Activated CD8-positive, alpha-beta T cell treated with anti-CD3 and anti-CD28 coated beads, Interleukin-2, amount 10 ng/mL, durations not matched to agents 7 days and 5 days (primary cell): ENCODE measurements at regions of chr6 and their contacts with region 1.

Region 1: GRCh38 chr6:70221025-70221714 is 81.7 kb downstream of the COL9A1 start:
- DNase-seq: no peak
- ATAC-seq: no peak
- H3K4me3 Mint-ChIP-seq: no peak overlapping the region
- H3K27ac Mint-ChIP-seq: no peak overlapping the region
- H3K4me1 Mint-ChIP-seq: no peaks in the 10 kb centered on the region
- H3K27me3 Mint-ChIP-seq: peaks cover 7% of the 10 kb centered on the region

Region 2: DNA sequence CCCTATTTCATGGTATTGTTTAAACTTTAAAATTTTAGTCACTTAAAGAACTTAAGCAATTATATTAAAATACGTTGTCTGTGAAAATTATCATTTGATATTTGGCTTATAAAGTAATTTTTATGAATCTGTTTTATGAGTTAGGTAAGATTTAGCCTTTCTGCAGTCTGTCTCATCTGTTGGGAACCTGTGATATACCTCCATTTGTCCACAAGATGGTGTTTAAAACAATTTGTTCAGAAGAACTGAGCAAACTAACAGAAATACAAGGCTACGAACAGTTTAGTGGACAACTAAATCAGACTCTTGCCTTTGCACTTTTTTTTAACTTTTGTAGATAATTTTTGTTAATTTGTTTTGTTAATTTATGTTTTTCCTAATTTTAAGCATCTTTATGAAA is 10.7 kb before region 1 on chr6:
- CTCF ChIA-PET with region 1: interaction called, 18 read pairs
- POLR2A ChIA-PET with region 1: no interaction called
- DNase-seq: no peak
- ATAC-seq: no peak
- H3K4me3 Mint-ChIP-seq: no peak overlapping the region
- H3K27ac Mint-ChIP-seq: no peak overlapping the region
- H3K4me1 Mint-ChIP-seq: no peaks in the 10 kb centered on the region
- H3K27me3 Mint-ChIP-seq: peaks cover 5% of the 10 kb centered on the region

Region 3: GRCh38 chr6:70231311-70231710 is 10.1 kb after region 1 on chr6:
- CTCF ChIA-PET with region 1: interaction called, 42 read pairs
- POLR2A ChIA-PET with region 1: no interaction called
- DNase-seq: no peak
- ATAC-seq: no peak
- H3K4me3 Mint-ChIP-seq: no peak overlapping the region
- H3K27ac Mint-ChIP-seq: no peak overlapping the region
- H3K4me1 Mint-ChIP-seq: no peaks in the 10 kb centered on the region
- H3K27me3 Mint-ChIP-seq: peaks cover 2% of the 10 kb centered on the region

Region 4: DNA sequence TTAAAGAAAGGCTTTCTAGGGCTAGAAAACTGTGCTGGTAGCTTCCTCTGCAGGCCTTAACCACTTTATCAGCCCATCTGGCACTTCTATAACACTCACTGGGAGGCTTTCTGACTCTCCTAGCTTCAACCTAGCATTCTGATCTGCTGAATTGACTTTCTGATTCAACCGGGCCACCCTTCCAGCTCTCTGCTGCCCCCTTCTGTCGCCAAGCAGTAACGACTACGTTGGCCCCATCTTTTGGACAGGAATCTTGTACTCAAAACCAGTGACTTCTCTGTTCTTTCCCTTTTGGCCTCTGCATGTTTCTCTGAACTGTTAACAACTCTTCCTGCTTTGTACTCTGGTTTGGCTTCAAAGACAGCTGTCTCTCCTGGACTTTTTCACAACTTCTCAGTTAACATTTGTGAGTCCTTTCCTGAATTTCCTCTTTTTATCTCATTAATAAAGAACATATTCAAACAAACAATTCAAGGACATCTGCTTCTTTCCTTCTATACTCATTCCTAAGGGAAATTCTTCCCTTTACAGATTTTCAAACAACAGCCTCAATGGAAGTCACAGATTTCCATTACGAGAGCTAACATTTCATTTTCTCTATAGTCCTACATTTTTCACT is 148.3 kb after region 1 on chr6:
- CTCF ChIA-PET with region 1: interaction called, 36 read pairs
- POLR2A ChIA-PET with region 1: no interaction called
- DNase-seq: peak; percentile 76
- ATAC-seq: peak; percentile 84
- H3K4me3 Mint-ChIP-seq: no peak overlapping the region
- H3K27ac Mint-ChIP-seq: no peak overlapping the region
- H3K4me1 Mint-ChIP-seq: no peaks in the 10 kb centered on the region
- H3K27me3 Mint-ChIP-seq: peaks cover 36% of the 10 kb centered on the region